ENCODE measurements at regions of chr3 and their contacts with region 1.

Region 1: DNA sequence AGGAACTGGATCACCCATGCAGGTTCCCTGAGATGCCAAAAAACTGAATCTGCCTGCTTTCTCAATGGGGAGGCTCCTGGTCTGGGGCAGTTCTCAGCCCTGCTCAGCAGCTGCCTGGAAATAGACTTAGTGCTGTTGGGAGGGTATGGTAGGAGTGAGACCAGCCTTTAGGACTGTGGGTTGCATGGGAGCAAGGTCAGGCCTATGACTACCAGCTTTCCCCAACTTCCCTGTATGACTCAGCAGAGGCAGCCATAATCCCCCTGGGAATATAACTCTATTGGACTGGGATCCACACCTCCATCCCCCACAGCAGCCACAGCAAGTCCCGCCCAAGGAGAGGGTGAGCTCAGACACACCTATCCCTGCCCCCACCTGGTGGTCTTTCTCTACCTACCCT is 87.0 kb downstream of the CFAP44 start:
- DNase-seq: no peak

Region 2: DNA sequence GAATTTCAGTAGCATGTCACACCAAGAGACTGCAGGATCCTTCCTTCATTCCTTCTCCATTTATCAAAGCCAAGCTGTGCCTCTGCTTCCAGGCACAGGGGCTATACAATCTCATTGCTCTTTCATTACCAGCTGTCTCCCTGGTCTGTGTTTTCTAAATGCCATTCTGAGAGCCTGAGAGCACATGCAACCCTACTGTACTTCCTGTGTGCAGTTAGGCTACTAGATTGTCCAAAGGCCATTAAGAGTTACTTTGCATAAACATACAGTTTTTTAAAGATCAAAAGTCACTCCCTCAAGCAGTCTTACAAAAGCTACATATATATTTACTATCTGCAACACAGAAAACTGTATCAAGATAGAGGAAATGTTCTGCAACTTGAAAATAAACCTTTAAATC is 23.1 kb before region 1 on chr3:
- intact Hi-C with region 1: loop called in 1 of 2 experiments (anchors 1 kb)
- DNase-seq: no peak